Testis (tissue), 5 donors: ENCODE measurements at regions of chr10 and their contacts with region 1.

Region 1: DNA sequence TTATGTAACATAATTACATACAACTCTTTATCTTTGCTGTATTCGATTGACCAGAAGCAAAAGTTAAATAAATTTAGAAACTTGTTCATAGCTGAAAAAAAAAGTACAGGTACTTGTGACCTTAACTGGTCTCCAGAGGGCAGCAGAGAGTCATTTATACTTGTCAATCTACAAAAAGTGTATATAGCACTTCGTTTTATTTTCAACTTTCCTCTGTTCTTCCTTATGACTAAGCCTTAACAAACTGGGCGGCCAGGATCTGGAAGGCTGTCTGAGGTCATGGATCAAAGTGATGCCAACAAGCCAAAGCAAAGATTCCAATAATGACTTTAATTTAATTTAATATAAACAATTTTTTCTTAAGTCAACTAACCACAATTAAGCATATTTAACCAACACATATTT is 29.8 kb downstream of the C10orf67 start:
- DNase-seq: peak; percentile 62
- H3K4me3 ChIP-seq: no peak overlapping the region
- H3K27ac ChIP-seq: no peak overlapping the region
- H3K4me1 ChIP-seq: no peaks in the 10 kb centered on the region
- H3K27me3 ChIP-seq: no peaks in the 10 kb centered on the region
- CTCF ChIP-seq: peak; percentile 18 to 57 (median 34)
- POLR2A ChIP-seq: no peak

Region 2: DNA sequence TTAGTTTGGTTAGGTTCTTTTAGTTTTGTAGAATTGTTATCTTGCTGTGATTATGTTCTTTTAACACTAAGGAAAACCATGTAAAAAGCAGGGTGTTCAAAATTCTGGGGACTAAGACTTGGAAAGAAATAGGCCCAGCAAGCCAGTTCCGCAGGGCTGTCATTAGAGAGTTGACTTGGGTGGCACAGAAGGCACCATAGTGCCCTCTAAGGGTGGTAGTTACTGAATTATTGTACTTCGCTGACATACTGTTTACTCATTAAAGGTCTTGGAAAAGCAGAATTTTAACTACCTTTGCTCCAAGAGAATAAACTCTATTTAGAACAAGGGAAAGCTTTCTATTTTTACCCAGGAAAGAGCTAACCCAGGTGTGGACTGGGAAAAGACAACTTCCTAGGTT is 210.6 kb after region 1 on chr10:
- intact Hi-C with region 1: loop called (anchors 10 kb)
- DNase-seq: no peak
- H3K4me3 ChIP-seq: no peak overlapping the region
- H3K27ac ChIP-seq: no peak overlapping the region
- H3K4me1 ChIP-seq: no peaks in the 10 kb centered on the region
- H3K27me3 ChIP-seq: no peaks in the 10 kb centered on the region
- CTCF ChIP-seq: no peak
- POLR2A ChIP-seq: no peak